ENCODE measurements at regions of chr17 and their contacts with region 1.

Region 1: GRCh38 chr17:68108313-68109000 is 72.9 kb downstream of the KPNA2 start:
- DNase-seq: no peak
- H3K4me3 ChIP-seq: no peak overlapping the region
- H3K27ac ChIP-seq: no peak overlapping the region
- H3K4me1 ChIP-seq: no peaks in the 10 kb centered on the region
- H3K27me3 ChIP-seq: no peaks in the 10 kb centered on the region
- CTCF ChIP-seq: no peak

Region 2: DNA sequence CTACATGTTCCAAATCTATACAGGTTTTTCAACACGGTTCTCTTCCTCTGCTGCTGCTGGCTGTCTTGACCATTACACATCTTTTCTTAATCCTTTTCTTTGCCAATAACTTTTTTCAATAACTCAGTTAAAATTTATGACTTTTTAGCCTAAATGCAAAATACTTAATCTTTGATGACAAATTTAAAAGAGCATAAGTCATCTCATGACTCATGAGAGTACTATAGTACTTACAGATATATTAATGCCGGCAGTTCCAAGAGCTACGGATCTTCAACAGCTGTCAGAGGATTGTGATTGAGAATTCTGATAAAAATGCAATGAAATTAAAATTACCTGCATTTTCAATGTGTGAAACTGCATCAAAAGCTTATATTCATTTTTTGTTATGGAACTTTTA is 32.6 kb after region 1 on chr17:
- CTCF ChIA-PET with region 1: no interaction called
- POLR2A ChIA-PET with region 1: interaction called, 11 read pairs
- intact Hi-C with region 1: no loop called
- DNase-seq: no peak
- H3K4me3 ChIP-seq: no peak overlapping the region
- H3K27ac ChIP-seq: no peak overlapping the region
- H3K4me1 ChIP-seq: no peaks in the 10 kb centered on the region
- H3K27me3 ChIP-seq: no peaks in the 10 kb centered on the region
- CTCF ChIP-seq: no peak

Measured in A673 (cell line).